Activated B cell treated with CpG ODN at 0.5 μM for 24 hours (primary cell): ENCODE measurements at regions of chr9 and their contacts with region 1.

Region 1: GRCh38 chr9:112074250-112075008 is 100.7 kb downstream of the SUSD1 start:
- DNase-seq: peak; percentile 25
- ATAC-seq: peak; percentile 83
- H3K4me3 Mint-ChIP-seq: peak overlapping the region; percentile 78
- H3K27ac Mint-ChIP-seq: peak overlapping the region; percentile 91
- H3K4me1 Mint-ChIP-seq: peaks cover 79% of the 10 kb centered on the region
- H3K27me3 Mint-ChIP-seq: no peaks in the 10 kb centered on the region
- CTCF ChIP-seq: peak; percentile 56

Region 2: GRCh38 chr9:111029260-111029659 is 1045.2 kb before region 1 on chr9:
- CTCF ChIA-PET with region 1: no interaction called
- POLR2A ChIA-PET with region 1: no interaction called
- intact Hi-C with region 1: no loop called
- DNase-seq: no peak
- ATAC-seq: no peak
- H3K4me3 Mint-ChIP-seq: no peak overlapping the region
- H3K27ac Mint-ChIP-seq: no peak overlapping the region
- H3K4me1 Mint-ChIP-seq: no peaks in the 10 kb centered on the region
- H3K27me3 Mint-ChIP-seq: peaks cover 14% of the 10 kb centered on the region
- CTCF ChIP-seq: no peak

Region 3: DNA sequence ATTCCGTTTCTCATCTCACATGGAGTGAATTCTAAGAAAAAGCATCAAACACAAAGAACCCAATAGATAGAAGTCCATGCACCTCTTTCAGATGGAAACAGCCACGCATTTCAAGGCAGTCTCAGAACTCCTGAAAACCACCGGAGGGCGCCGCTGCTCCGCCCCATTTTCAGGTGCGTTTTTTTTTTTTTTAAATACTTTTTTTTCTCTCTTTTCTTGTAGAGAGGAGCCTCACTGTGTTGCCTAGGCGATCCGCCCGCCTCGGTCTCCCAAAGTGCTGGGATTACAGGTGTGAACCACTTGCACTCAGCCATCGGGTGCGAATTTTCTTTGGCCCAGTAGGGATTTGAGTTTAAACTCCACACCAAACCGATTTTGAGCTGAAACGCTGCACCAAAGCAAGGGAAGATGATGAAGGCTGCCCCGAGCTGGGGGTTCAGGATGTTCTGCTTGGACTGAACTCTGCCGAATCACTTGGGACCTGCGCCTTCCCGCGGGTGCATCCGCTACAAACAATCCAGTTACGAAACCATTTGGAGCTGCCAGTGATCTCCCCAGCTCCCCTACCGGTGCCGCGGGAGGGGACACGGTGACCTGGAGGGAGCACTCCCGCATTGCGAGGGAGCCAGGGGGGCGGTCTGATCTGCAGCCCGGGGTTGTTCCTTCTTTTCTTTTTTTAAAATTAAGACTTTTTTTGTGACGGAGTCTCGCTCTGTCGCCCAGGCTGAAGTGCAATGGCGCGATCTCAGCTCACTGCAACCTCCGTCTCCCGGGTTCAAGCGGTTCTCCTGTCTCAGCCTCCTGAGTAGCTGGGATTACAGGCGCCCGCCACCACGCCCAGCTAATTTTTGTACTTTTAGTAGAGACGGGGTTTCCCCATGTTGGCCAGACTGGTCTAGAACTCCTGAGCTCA is 476.4 kb before region 1 on chr9:
- CTCF ChIA-PET with region 1: interaction called, 9 read pairs
- POLR2A ChIA-PET with region 1: interaction called, 10 read pairs
- intact Hi-C with region 1: loop called (anchors 1 kb)
- DNase-seq: peak; percentile 27
- ATAC-seq: peak; percentile 61
- H3K4me3 Mint-ChIP-seq: peak overlapping the region; percentile 83
- H3K27ac Mint-ChIP-seq: no peak overlapping the region
- H3K4me1 Mint-ChIP-seq: peaks cover 22% of the 10 kb centered on the region
- H3K27me3 Mint-ChIP-seq: peaks cover 29% of the 10 kb centered on the region
- CTCF ChIP-seq: no peak

Region 4: GRCh38 chr9:111828193-111828592 is 246.2 kb before region 1 on chr9:
- CTCF ChIA-PET with region 1: interaction called, 32 read pairs
- POLR2A ChIA-PET with region 1: interaction called, 7 read pairs
- intact Hi-C with region 1: loop called (anchors 1 kb)
- DNase-seq: no peak
- ATAC-seq: no peak
- H3K4me3 Mint-ChIP-seq: no peak overlapping the region
- H3K27ac Mint-ChIP-seq: no peak overlapping the region
- H3K4me1 Mint-ChIP-seq: peaks cover 10% of the 10 kb centered on the region
- H3K27me3 Mint-ChIP-seq: no peaks in the 10 kb centered on the region
- CTCF ChIP-seq: no peak

Region 5: DNA sequence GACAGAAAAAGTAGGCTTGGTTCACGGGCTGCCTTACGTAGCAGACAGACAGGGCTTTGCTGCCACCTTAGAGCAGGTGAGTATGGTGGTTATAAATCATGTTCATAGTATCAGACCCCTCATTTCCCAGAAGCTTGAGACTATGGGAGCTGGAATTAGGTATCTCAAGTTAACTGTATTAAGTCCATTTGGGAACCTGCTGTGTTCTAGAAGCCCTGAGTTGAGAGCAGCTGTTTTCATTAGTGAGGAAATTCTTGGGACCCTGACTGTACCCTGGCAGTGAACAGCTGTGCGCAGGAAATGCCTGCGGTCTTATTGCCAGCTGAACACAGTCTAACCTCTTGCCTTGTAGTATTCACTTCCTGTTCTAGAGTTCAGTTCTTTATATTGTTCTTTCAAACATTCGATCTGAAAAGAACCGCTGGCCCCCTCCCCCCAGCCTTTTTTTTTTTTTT is 148.0 kb before region 1 on chr9:
- CTCF ChIA-PET with region 1: interaction called, 12 read pairs
- POLR2A ChIA-PET with region 1: interaction called, 16 read pairs
- intact Hi-C with region 1: loop called (anchors 1 kb)
- DNase-seq: peak; percentile 34
- ATAC-seq: peak; percentile 97
- H3K4me3 Mint-ChIP-seq: peak overlapping the region; percentile 56
- H3K27ac Mint-ChIP-seq: peak overlapping the region; percentile 83
- H3K4me1 Mint-ChIP-seq: peaks cover 48% of the 10 kb centered on the region
- H3K27me3 Mint-ChIP-seq: no peaks in the 10 kb centered on the region
- CTCF ChIP-seq: no peak

Region 6: DNA sequence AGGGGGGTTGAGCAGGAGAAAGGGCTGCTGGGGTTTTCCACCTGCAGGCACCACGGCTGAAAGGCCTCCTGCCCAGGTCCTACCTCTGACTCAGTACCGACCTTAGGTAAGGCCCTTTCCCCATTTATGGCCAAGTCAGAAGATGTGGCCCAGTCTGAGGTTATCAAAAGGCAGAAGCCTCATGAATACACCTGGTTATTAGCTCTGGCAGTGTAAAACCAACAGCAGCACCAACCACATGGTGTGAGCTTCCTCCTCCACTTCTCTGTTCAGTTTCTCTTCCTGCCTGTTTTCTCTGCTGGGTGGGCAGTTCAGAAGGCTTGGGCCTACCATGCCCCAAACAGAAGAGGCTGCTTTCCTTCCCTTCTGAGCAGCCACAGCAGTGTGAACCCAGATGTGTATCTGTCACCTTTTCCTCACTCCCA is 90.9 kb before region 1 on chr9:
- CTCF ChIA-PET with region 1: interaction called, 11 read pairs
- POLR2A ChIA-PET with region 1: interaction called, 11 read pairs
- intact Hi-C with region 1: loop called (anchors 1 kb)
- DNase-seq: peak; percentile 44
- ATAC-seq: peak; percentile 86
- H3K4me3 Mint-ChIP-seq: peak overlapping the region; percentile 55
- H3K27ac Mint-ChIP-seq: peak overlapping the region; percentile 97
- H3K4me1 Mint-ChIP-seq: peaks cover 66% of the 10 kb centered on the region
- H3K27me3 Mint-ChIP-seq: no peaks in the 10 kb centered on the region
- CTCF ChIP-seq: no peak

Region 7: DNA sequence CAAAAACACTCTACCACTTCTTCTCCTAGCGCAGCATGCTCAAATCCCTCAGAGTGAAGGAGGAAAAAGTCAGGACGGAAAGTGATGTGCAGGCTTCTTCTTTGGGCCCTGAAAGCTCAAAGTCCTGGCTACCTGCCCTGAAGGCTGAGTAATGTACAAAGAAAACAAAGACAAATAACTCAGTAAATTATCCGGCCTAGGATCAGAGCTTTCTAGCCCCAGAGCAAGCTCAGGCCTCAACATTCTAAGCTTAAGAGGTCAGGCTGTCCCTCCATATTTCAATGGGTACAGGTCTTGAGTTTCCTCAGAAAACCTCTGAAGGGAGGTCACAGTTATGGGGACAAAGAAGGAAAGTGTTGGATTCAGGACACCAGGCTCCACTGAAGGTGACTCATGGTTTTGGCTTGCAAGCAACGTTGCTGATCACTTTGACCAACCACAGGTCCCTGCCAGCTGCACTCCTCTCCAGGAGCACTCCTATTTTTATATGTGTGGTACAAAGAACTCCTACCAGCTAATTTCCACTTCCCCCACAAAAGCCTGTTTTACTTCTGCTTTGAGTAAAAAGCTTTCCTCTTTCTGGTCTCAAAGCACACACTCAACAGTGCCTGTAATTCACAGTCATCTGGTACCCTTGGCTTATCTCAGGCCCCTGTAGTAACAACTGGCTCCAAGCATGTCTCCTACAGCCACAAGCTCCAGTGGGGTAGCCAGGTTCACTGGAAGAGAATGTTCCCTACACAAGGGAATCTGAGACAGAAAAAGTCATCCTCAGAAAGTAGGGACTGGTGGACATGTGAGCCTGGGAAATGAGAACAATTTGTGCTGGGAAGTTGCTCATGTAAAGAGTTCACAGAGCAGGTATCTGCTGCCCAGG is 62.2 kb before region 1 on chr9:
- CTCF ChIA-PET with region 1: interaction called, 29 read pairs
- POLR2A ChIA-PET with region 1: interaction called, 39 read pairs
- intact Hi-C with region 1: loop called (anchors 1 kb)
- DNase-seq: no peak
- ATAC-seq: peak; percentile 85
- H3K4me3 Mint-ChIP-seq: peak overlapping the region; percentile 47
- H3K27ac Mint-ChIP-seq: peak overlapping the region; percentile 93
- H3K4me1 Mint-ChIP-seq: peaks cover 84% of the 10 kb centered on the region
- H3K27me3 Mint-ChIP-seq: no peaks in the 10 kb centered on the region
- CTCF ChIP-seq: no peak

Region 8: GRCh38 chr9:112037281-112038016 is 37.0 kb before region 1 on chr9:
- CTCF ChIA-PET with region 1: interaction called, 20 read pairs
- POLR2A ChIA-PET with region 1: interaction called, 208 read pairs
- intact Hi-C with region 1: loop called (anchors 1 kb)
- DNase-seq: no peak
- ATAC-seq: peak; percentile 65
- H3K4me3 Mint-ChIP-seq: peak overlapping the region; percentile 68
- H3K27ac Mint-ChIP-seq: peak overlapping the region; percentile 96
- H3K4me1 Mint-ChIP-seq: peaks cover 88% of the 10 kb centered on the region
- H3K27me3 Mint-ChIP-seq: no peaks in the 10 kb centered on the region
- CTCF ChIP-seq: no peak

Region 9: DNA sequence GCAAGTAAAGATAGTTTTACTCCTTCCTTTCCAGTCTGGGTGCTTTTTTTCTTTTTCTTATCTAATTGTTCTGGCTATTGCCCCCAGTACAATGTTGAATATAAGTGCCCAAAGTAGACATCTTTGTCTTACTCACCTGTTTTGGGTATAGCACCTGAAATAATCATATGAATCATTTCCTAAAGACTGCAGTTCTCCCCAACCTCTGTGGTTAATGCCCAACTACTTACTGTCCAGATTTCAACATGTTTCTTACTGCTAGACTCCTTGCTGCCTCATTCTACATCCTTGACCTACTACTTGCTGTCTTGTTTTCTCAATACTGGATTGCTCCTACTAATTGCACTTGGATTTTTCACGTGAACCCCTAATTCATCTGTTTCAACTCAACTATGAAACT is 296.6 kb after region 1 on chr9:
- CTCF ChIA-PET with region 1: no interaction called
- POLR2A ChIA-PET with region 1: no interaction called
- intact Hi-C with region 1: no loop called
- DNase-seq: no peak
- ATAC-seq: no peak
- H3K4me3 Mint-ChIP-seq: no peak overlapping the region
- H3K27ac Mint-ChIP-seq: no peak overlapping the region
- H3K4me1 Mint-ChIP-seq: no peaks in the 10 kb centered on the region
- H3K27me3 Mint-ChIP-seq: no peaks in the 10 kb centered on the region
- CTCF ChIP-seq: no peak